WTC11 (cell line): ENCODE measurements at regions of chr12 and their contacts with region 1.

Region 1: DNA sequence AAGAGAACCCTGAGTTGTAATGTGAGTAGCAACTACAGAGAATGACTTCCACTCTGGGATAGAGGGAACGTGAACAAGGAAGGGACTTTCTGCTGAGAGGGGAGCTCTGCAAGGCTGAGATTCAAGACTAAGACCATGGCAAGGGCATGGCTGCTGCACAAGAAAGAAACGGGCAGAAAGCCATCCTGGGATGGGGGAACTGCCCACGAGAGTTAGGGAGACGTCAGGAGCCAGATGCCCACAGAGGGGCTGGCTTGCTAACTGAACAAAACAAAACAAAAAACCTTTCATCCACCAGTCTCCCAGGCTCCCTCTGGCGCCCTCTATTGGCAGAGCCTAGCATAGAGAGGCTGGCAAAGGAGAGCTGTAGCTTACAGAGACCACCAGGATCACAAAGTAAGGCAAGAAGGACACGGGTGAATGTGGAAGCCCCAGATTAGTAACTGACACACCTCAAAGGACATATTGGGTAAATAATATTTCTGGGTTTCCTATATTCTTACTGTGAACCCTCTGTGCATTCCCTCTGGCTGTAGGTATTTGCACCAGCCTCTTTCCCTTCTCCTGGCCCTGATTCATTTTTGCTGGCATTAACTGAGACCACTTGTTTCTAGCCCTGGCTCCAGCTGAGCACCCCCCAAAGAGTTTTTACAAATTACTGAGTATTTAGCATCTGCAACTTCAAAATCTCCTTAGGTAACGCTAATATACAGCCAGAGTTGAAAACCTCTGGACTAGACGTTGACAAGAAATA is 338.3 kb downstream of the EMP1 start:
- DNase-seq: peak; percentile 97
- ATAC-seq: peak; percentile 89
- H3K4me3 Mint-ChIP-seq: peak overlapping the region; percentile 53
- H3K27ac Mint-ChIP-seq: peak overlapping the region; percentile 43
- H3K4me1 Mint-ChIP-seq: peaks cover 40% of the 10 kb centered on the region
- H3K27me3 Mint-ChIP-seq: peaks cover 5% of the 10 kb centered on the region
- CTCF ChIP-seq: peak; percentile 90

Region 2: DNA sequence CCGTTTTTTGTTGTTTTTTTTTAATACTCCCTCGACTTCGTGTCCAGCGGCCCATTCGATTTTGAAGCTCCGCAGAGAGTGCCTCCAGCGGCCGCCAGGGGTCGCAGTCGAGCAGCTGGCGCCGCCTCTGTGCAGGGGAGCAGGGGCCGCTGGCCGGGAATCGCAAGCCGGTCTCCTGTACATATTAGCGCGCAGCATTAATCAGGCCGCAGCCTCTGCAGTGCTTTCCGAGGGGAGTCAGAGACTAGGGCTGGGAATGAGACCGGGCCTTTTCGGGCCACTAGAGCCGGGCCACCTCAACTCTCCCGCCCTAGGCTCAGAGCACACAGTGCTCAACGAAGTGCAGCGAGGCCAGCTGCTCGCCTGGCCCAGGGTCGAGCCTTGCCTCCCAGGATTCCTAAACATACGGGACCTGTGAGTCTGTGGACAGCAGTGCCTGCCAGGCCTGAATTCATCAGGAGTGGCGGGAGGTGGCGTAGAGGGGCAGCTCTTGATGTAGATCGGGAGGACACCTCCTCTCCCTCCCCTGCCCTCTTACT is 256.5 kb before region 1 on chr12:
- CTCF ChIA-PET with region 1: interaction called, 27 read pairs
- POLR2A ChIA-PET with region 1: no interaction called
- DNase-seq: peak; percentile 83
- ATAC-seq: peak; percentile 90
- H3K4me3 Mint-ChIP-seq: peak overlapping the region; percentile 24; the same call in 1 of the 2 replicates
- H3K27ac Mint-ChIP-seq: no peak overlapping the region
- H3K4me1 Mint-ChIP-seq: peaks cover 28% of the 10 kb centered on the region
- H3K27me3 Mint-ChIP-seq: no peaks in the 10 kb centered on the region; the same call in none of the 2 replicates
- CTCF ChIP-seq: peak; percentile 99

Region 3: DNA sequence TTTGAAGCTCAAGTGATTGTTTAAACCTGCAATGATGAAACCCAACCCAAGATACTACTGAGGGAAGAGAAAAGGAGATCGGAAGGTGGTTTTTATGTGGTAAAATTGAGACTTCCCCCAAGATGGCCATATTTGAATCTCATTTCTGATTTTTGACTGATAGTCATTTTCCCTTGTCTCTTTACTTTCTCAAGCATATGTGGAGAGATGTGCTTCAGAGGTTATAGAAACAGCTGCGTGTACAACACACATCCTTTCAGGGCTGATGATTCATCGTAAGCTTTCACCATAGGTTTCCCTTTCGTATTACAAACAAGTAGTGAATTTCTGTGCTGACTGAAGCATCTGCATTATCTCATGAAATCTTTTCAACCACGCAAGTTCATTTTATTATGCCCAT is 62.1 kb before region 1 on chr12:
- CTCF ChIA-PET with region 1: no interaction called
- POLR2A ChIA-PET with region 1: no interaction called
- DNase-seq: no peak
- ATAC-seq: no peak
- H3K4me3 Mint-ChIP-seq: no peak overlapping the region
- H3K27ac Mint-ChIP-seq: no peak overlapping the region
- H3K4me1 Mint-ChIP-seq: no peaks in the 10 kb centered on the region
- H3K27me3 Mint-ChIP-seq: no peaks in the 10 kb centered on the region
- CTCF ChIP-seq: no peak

Region 4: DNA sequence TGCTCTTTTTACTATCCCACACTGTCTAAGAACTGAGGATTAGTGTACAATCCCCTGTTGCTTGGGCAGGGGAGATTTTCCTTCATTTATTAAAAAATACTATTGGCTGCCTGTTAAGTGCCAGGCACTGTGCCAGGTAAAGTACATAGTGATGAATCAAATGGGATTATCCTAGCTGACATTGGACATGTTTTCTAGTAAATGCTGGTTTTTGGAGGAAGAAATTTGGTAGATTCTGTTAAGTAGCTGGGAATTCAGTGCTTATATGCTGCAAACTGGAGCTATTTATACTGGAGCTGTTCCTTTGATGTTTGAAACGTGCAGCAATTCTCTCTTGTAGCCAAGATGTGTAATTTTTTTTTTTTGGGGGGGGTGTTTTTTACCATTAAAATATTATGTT is 38.7 kb before region 1 on chr12:
- CTCF ChIA-PET with region 1: interaction called, 10 read pairs
- POLR2A ChIA-PET with region 1: no interaction called
- DNase-seq: no peak
- ATAC-seq: no peak
- H3K4me3 Mint-ChIP-seq: no peak overlapping the region
- H3K27ac Mint-ChIP-seq: no peak overlapping the region
- H3K4me1 Mint-ChIP-seq: peaks cover 21% of the 10 kb centered on the region
- H3K27me3 Mint-ChIP-seq: no peaks in the 10 kb centered on the region; the same call in 1 of the 2 replicates
- CTCF ChIP-seq: no peak

Region 5: DNA sequence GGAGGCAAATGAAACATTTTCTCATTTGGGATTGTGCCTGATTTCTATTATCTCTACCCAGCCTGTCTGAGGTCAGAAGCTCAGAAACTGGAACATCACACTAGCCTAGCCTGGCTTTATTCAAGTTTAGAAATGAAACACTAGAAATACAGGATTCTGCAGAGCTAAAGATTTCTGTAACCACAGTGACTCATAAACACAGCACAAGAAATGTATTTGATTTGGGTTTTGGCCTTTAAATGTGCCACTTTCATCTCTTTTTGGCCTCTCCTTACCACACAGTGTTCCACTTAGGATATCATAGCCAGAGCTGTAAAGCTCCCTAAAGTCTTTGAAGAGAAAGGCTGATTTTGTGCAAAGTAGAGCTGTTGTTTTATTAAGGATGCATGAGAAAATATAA is 30.7 kb before region 1 on chr12:
- CTCF ChIA-PET with region 1: interaction called, 13 read pairs
- POLR2A ChIA-PET with region 1: no interaction called
- DNase-seq: no peak
- ATAC-seq: no peak
- H3K4me3 Mint-ChIP-seq: no peak overlapping the region
- H3K27ac Mint-ChIP-seq: no peak overlapping the region
- H3K4me1 Mint-ChIP-seq: peaks cover 3% of the 10 kb centered on the region; the same call in 1 of the 2 replicates
- H3K27me3 Mint-ChIP-seq: no peaks in the 10 kb centered on the region
- CTCF ChIP-seq: no peak

Region 6: GRCh38 chr12:13523536-13524307 is 11.1 kb before region 1 on chr12:
- CTCF ChIA-PET with region 1: interaction called, 12 read pairs
- POLR2A ChIA-PET with region 1: no interaction called
- DNase-seq: no peak
- ATAC-seq: no peak
- H3K4me3 Mint-ChIP-seq: no peak overlapping the region
- H3K27ac Mint-ChIP-seq: no peak overlapping the region
- H3K4me1 Mint-ChIP-seq: no peaks in the 10 kb centered on the region
- H3K27me3 Mint-ChIP-seq: peaks cover 5% of the 10 kb centered on the region; the same call in 1 of the 2 replicates
- CTCF ChIP-seq: no peak

Region 7: GRCh38 chr12:13546231-13546630 is 11.4 kb after region 1 on chr12:
- CTCF ChIA-PET with region 1: interaction called, 32 read pairs
- POLR2A ChIA-PET with region 1: no interaction called
- DNase-seq: no peak
- ATAC-seq: no peak
- H3K4me3 Mint-ChIP-seq: no peak overlapping the region
- H3K27ac Mint-ChIP-seq: no peak overlapping the region
- H3K4me1 Mint-ChIP-seq: no peaks in the 10 kb centered on the region
- H3K27me3 Mint-ChIP-seq: peaks cover 6% of the 10 kb centered on the region; the same call in 1 of the 2 replicates
- CTCF ChIP-seq: no peak

Region 8: DNA sequence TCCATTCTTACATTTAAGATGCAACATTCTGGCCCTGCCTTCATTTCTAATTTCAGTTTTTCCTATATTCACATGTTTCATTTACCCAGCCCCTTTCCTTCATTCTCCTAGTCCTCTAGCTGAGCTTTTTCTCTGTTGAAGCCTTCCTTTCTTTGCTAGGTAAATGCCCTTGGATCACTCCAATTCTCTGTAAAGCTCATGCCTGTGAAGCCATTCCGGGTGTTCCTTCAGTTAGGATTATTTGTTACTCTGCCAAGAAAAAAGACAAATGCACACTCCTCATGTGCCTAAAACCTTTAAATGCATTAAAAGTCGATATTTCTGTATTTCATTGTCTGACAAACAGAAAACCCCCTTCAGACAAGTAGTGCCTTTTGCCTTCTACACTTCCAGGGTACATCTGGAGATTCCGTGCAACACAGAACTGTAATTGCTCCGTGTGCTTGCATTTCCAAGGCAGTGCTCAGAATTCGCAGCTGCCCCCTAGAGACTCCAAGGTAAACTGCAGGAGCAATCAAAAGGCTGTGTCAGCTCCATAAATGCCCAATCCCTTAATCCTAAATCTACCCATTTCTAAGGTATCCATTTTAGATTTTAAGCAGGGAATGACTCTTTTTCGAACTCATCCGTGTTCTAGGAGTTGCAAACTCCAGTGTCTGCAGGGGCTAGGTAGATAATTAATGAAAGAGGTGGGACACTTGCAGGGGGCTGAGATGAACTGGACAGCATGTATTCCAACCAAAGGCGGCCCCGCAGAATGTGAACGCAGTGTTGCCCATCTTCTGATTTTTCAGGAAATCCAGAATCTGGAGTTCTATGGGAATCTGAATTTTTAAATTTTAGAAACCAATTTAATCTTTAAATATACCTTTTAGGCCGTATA is 126.4 kb after region 1 on chr12:
- CTCF ChIA-PET with region 1: interaction called, 21 read pairs
- POLR2A ChIA-PET with region 1: no interaction called
- DNase-seq: peak; percentile 62
- ATAC-seq: peak; percentile 98
- H3K4me3 Mint-ChIP-seq: no peak overlapping the region
- H3K27ac Mint-ChIP-seq: no peak overlapping the region
- H3K4me1 Mint-ChIP-seq: peaks cover 6% of the 10 kb centered on the region; the same call in 1 of the 2 replicates
- H3K27me3 Mint-ChIP-seq: peaks cover 3% of the 10 kb centered on the region; the same call in 1 of the 2 replicates
- CTCF ChIP-seq: peak; percentile 81